ENCODE measurements at regions of chr3 and their contacts with region 1.

Region 1: GRCh38 chr3:9932843-9933560 is 632 bp upstream of the CRELD1 start:
- DNase-seq: peak; percentile 78
- H3K4me3 Mint-ChIP-seq: peak overlapping the region; percentile 96
- H3K27ac Mint-ChIP-seq: peak overlapping the region; percentile 95
- H3K4me1 Mint-ChIP-seq: peaks cover 34% of the 10 kb centered on the region
- H3K27me3 Mint-ChIP-seq: no peaks in the 10 kb centered on the region

Region 2: DNA sequence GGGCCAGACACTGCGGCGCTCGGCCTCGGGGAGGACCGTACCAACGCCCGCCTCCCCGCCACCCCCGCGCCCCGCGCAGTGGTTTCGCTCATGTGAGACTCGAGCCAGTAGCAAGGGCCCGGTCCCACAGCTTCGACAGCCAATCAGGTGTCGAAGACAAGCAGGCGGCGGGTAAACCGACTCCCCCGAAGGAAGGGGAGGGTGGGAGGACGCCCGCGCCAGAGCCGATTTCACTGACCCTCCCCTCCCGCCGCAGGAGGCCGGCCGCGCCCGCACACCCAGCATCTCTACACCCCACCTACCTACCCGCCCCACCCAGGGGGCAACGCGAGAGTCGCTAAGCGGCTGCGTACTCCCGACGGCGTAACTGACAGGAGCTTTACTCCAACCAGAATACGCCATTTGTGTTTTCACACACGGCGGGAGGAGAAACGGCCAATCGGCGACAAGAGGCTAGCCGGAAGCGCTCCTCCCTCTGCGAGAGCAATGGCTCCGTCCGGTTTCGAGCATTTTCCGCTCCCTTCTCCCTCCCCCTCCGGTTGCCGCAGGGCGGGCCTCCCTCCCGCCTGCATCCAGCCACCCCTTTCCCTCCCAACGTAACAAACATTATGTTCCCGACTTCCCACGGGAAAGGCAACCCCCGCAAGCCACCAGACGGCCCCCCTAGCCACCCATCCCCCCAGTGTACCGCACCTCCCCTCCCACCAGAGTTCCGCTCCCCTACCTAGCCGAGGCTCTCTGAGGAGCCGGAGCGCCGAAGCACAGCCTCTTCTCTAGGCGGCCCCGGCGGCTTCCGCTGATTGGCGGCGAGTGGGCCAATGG is 536.1 kb before region 1 on chr3:
- intact Hi-C with region 1: loop called (anchors 1 kb)
- DNase-seq: peak; percentile 98
- H3K4me3 Mint-ChIP-seq: peak overlapping the region; percentile 94
- H3K27ac Mint-ChIP-seq: peak overlapping the region; percentile 98
- H3K4me1 Mint-ChIP-seq: peaks cover 65% of the 10 kb centered on the region
- H3K27me3 Mint-ChIP-seq: no peaks in the 10 kb centered on the region

Region 3: DNA sequence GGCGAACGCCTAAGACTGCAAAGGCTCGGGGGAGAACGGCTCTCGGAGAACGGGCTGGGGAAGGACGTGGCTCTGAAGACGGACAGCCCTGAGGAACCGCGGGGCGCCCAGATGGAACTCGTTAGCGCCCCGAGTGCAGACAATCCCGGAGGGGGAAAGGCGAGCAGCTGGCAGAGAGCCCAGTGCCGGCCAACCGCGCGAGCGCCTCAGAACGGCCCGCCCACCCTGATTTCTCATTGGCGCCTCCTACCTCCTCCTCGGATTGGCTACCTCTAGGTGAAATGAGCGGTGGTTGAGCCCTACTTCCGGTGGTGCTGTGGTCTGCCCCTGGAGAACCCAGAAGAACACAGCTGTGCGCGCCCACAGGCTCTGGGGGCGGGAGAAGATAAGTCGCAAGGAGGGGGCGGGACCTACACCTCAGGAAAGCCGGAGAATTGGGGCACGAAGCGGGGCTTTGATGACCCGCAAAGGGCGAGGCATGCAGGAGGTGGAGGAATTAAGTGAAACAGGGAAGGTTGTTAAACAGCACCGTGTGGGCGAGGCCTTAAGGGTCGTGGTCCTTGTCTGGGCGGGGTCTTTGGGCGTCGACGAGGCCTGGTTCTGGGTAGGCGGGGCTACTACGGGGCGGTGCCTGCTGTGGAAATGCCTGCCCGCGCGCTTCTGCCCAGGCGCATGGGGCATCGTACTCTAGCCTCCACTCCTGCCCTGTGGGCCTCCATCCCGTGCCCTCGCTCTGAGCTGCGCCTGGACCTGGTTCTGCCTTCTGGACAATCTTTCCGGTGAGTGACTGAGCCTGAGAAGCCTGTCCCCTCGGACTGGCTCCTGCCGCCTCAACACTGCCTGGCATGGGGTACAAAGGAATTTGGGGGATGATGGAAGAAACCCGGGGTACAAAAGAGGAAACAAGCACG is 183.1 kb before region 1 on chr3 and contains the start of gene OGG1:
- intact Hi-C with region 1: loop called (anchors 1 kb)
- DNase-seq: peak; percentile 96
- H3K4me3 Mint-ChIP-seq: peak within 1 kb of the TSS; percentile 96
- H3K27ac Mint-ChIP-seq: peak within 1 kb of the TSS; percentile 95
- H3K4me1 Mint-ChIP-seq: peaks cover 61% of the 10 kb centered on the region
- H3K27me3 Mint-ChIP-seq: no peaks in the 10 kb centered on the region
- total RNA-seq, gene OGG1: 40.2 and 40.6 TPM in 2 replicates

Region 4: GRCh38 chr3:9890249-9891071 is 42.5 kb before region 1 on chr3 and contains the start of gene JAGN1:
- intact Hi-C with region 1: loop called (anchors 1 kb)
- DNase-seq: peak; percentile 82
- H3K4me3 Mint-ChIP-seq: peak within 1 kb of the TSS; percentile 97
- H3K27ac Mint-ChIP-seq: peak within 1 kb of the TSS; percentile 98
- H3K4me1 Mint-ChIP-seq: peaks cover 36% of the 10 kb centered on the region
- H3K27me3 Mint-ChIP-seq: no peaks in the 10 kb centered on the region
- total RNA-seq, gene JAGN1: 42.4 and 46.3 TPM in 2 replicates

Region 5: GRCh38 chr3:9951962-9952805 is 19.2 kb after region 1 on chr3 and contains the start of gene PRRT3:
- intact Hi-C with region 1: loop called (anchors 1 kb)
- DNase-seq: peak; percentile 57
- H3K4me3 Mint-ChIP-seq: peak within 1 kb of the TSS; percentile 90
- H3K27ac Mint-ChIP-seq: peak within 1 kb of the TSS; percentile 40
- H3K4me1 Mint-ChIP-seq: peaks cover 14% of the 10 kb centered on the region
- H3K27me3 Mint-ChIP-seq: no peaks in the 10 kb centered on the region
- total RNA-seq, gene PRRT3: 16.4 and 16.8 TPM in 2 replicates

Region 6: DNA sequence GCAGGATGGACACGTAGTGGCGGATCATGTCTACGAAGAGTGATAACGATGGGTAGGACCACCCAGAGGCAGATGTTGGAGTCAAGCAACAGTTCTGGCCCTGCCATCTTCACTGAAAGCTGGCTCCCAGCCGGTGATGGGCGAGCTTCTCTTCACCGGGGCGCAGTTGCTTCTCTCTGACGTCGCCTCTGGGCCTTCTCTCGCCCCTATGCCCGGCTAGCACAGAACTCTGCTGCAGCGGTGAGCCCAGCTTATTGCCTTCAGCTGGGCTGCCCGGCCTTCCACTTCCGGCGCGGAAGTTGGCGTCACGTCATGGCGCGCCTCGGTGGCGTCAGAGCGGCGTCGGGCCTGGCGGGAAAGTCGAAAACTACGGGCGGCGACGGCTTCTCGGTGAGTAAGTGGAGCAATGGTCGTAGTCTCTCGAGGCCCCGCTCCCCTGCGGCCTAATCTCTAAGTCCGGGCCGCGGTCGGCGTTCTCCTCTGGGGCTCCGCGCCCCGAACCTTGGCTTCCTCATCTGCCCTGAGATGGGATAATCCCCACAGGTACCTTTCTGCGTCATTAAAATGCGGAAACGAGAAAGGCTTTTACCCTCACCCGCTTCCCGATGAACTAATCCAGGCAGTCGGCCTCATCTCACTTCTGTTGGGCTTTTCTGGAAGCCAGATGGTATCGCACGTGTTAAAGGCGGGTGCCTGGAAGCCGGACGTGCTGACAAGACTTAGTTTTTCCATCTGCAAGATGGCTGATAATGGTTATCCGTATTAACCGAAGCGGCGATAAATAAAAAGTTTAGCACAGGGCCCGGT is 93.3 kb after region 1 on chr3 and contains the start of gene FANCD2:
- intact Hi-C with region 1: loop called (anchors 1 kb)
- DNase-seq: peak; percentile 90
- H3K4me3 Mint-ChIP-seq: peak within 1 kb of the TSS; percentile 98
- H3K27ac Mint-ChIP-seq: peak within 1 kb of the TSS; percentile 99
- H3K4me1 Mint-ChIP-seq: peaks cover 33% of the 10 kb centered on the region
- H3K27me3 Mint-ChIP-seq: no peaks in the 10 kb centered on the region
- total RNA-seq, gene FANCD2: 63.4 and 64.2 TPM in 2 replicates

Region 7: DNA sequence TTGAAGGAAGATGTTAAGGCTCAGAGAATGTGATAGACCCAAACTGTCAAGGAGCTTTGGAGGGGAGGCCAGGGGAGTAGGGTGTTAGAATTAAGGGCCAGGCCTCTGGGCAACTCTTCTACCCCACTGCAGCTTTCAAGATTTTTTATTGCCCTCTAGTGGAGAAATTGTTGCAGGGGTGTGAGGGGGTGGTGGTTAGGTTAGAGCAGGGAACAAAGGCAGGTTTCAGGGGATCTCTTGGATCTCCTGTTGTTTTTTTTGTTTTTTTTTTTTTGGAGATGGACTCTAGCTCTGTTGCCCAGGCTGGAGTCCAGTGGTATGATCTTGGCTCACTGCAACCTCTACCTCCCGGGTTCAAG is 389.3 kb after region 1 on chr3:
- intact Hi-C with region 1: loop called (anchors 1 kb)
- DNase-seq: peak; percentile 24
- H3K4me3 Mint-ChIP-seq: peak overlapping the region; percentile 30
- H3K27ac Mint-ChIP-seq: no peak overlapping the region
- H3K4me1 Mint-ChIP-seq: peaks cover 30% of the 10 kb centered on the region
- H3K27me3 Mint-ChIP-seq: peaks cover 13% of the 10 kb centered on the region